ENCODE measurements at regions of chr1 and their contacts with region 1.

Region 1: GRCh38 chr1:61111084-61111788 is 28.9 kb downstream of the NFIA start:
- DNase-seq: no peak
- H3K4me3 ChIP-seq: no peak overlapping the region
- H3K27ac ChIP-seq: no peak overlapping the region
- H3K4me1 ChIP-seq: peaks cover 2 to 17% (median 8%) of the 10 kb centered on the region in 4 experiments
- H3K27me3 ChIP-seq: no peaks in the 10 kb centered on the region

Region 2: GRCh38 chr1:61797045-61797755 is 686.0 kb after region 1 on chr1:
- CTCF ChIA-PET with region 1: no interaction called
- POLR2A ChIA-PET with region 1: interaction called, 10 read pairs
- DNase-seq: no peak
- H3K4me3 ChIP-seq: no peak overlapping the region
- H3K27ac ChIP-seq: no peak overlapping the region
- H3K4me1 ChIP-seq: no peaks in the 10 kb centered on the region
- H3K27me3 ChIP-seq: no peaks in the 10 kb centered on the region

Measured in common myeloid progenitor, CD34-positive (primary cell).